ENCODE measurements at regions of chr17 and their contacts with region 1.

Region 1: GRCh38 chr17:57906910-57907309 is 48.3 kb downstream of the CUEDC1 start:
- DNase-seq: no peak
- ATAC-seq: no peak
- H3K4me3 ChIP-seq: no peak overlapping the region
- H3K4me3 Mint-ChIP-seq: no peak overlapping the region
- H3K27ac ChIP-seq: no peak overlapping the region
- H3K27ac Mint-ChIP-seq: no peak overlapping the region
- H3K4me1 ChIP-seq: peaks cover 36% of the 10 kb centered on the region
- H3K4me1 Mint-ChIP-seq: peaks cover 6 to 11% of the 10 kb centered on the region in 2 donors
- H3K27me3 ChIP-seq: no peaks in the 10 kb centered on the region
- H3K27me3 Mint-ChIP-seq: peaks cover 3 to 4% of the 10 kb centered on the region in 2 donors
- CTCF ChIP-seq: no peak

Region 2: GRCh38 chr17:57946798-57947358 is 40.0 kb after region 1 on chr17:
- intact Hi-C with region 1: loop called (anchors 5 kb)
- DNase-seq: peak; percentile 25 to 64
- ATAC-seq: peak; percentile 79 to 86 (median 85)
- H3K4me3 ChIP-seq: peak overlapping the region; percentile 28
- H3K4me3 Mint-ChIP-seq: peak overlapping the region; percentile 90
- H3K27ac ChIP-seq: no peak overlapping the region
- H3K27ac Mint-ChIP-seq: peak overlapping the region in 1 of 2 donors; percentile 74
- H3K4me1 ChIP-seq: peaks cover 49% of the 10 kb centered on the region
- H3K4me1 Mint-ChIP-seq: peaks cover 33 to 41% of the 10 kb centered on the region in 2 donors
- H3K27me3 ChIP-seq: no peaks in the 10 kb centered on the region
- H3K27me3 Mint-ChIP-seq: peaks cover 17 to 24% of the 10 kb centered on the region in 2 donors
- CTCF ChIP-seq: no peak

Region 3: GRCh38 chr17:58219001-58219788 is 312.3 kb after region 1 on chr17 and contains the start of gene MKS1:
- intact Hi-C with region 1: no loop called
- DNase-seq: peak; percentile 92 to 97
- ATAC-seq: peak; percentile 95 to 98 (median 97)
- H3K4me3 ChIP-seq: peak within 1 kb of the TSS; percentile 81
- H3K4me3 Mint-ChIP-seq: peak within 1 kb of the TSS; percentile 96
- H3K27ac ChIP-seq: peak within 1 kb of the TSS; percentile 77
- H3K27ac Mint-ChIP-seq: peak within 1 kb of the TSS; percentile 94 to 95
- H3K4me1 ChIP-seq: peaks cover 14% of the 10 kb centered on the region
- H3K4me1 Mint-ChIP-seq: peaks cover 18 to 22% of the 10 kb centered on the region in 2 donors
- H3K27me3 ChIP-seq: no peaks in the 10 kb centered on the region
- H3K27me3 Mint-ChIP-seq: peaks cover 0 to 13% of the 10 kb centered on the region in 2 donors
- CTCF ChIP-seq: peak; percentile 63
- total RNA-seq, gene MKS1: 4.5 to 10.7 (median 8.5) TPM

Measured in natural killer cell (primary cell).